ENCODE measurements at regions of chr6 and their contacts with region 1.

Region 1: DNA sequence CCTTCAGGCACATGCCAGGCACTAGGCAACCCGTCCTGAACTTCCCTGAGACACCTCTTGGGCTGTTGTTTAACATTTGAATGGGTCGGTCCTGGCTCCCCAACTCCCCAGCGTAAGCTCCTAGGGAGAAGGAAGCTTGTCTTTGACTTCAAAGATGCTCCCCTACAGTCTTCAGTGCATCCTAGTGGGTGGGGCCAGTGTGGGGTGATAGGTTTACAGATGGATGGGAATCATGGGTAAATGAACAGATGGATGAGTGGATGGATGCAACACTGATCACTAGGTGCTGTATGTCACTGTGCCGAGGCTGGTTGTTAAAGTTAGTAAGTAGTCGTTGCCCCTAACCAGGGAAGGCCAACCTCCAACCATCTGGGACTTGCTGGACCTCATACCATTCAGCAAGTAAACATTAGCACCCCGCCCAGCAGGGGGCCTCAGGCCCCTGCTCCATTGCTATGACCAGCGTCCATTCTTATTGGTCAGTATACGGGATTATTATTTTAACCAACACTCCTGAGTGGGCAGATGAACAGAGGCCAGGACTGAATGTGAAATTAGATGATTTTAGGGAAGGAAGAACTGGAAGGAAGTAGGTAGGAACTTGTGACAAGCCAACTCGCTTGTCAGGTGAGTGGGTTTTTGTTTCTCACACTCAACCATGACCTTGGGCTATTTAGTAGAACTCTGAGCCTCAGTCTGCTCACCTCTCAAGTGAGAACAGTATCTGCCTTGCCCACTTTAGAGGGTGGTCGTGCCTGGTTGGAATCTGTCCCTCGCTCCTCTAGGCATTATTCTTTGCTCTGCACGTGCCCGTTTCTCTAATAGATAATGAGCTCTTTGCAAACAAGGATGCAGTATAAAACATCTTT is 82.9 kb upstream of the FOXP4 start:
- DNase-seq: peak; percentile 79 to 84
- H3K4me3 ChIP-seq: no peak overlapping the region
- H3K4me3 Mint-ChIP-seq: no peak overlapping the region
- H3K27ac Mint-ChIP-seq: no peak overlapping the region
- H3K4me1 ChIP-seq: peaks cover 47% of the 10 kb centered on the region
- H3K4me1 Mint-ChIP-seq: peaks cover 46% of the 10 kb centered on the region
- H3K27me3 ChIP-seq: no peaks in the 10 kb centered on the region
- H3K27me3 Mint-ChIP-seq: no peaks in the 10 kb centered on the region
- CTCF ChIP-seq: peak; percentile 65 to 81

Region 2: GRCh38 chr6:41503841-41504465 is 40.7 kb after region 1 on chr6:
- CTCF ChIA-PET with region 1: interaction called, 3 read pairs
- POLR2A ChIA-PET with region 1: no interaction called
- intact Hi-C with region 1: loop called (anchors 2 kb)
- DNase-seq: peak; percentile 74 to 86
- H3K4me3 ChIP-seq: peak overlapping the region; percentile 33
- H3K4me3 Mint-ChIP-seq: peak overlapping the region; percentile 61
- H3K27ac Mint-ChIP-seq: peak overlapping the region; percentile 88
- H3K4me1 ChIP-seq: peaks cover 36% of the 10 kb centered on the region
- H3K4me1 Mint-ChIP-seq: peaks cover 44% of the 10 kb centered on the region
- H3K27me3 ChIP-seq: no peaks in the 10 kb centered on the region
- H3K27me3 Mint-ChIP-seq: no peaks in the 10 kb centered on the region
- CTCF ChIP-seq: no peak

Region 3: DNA sequence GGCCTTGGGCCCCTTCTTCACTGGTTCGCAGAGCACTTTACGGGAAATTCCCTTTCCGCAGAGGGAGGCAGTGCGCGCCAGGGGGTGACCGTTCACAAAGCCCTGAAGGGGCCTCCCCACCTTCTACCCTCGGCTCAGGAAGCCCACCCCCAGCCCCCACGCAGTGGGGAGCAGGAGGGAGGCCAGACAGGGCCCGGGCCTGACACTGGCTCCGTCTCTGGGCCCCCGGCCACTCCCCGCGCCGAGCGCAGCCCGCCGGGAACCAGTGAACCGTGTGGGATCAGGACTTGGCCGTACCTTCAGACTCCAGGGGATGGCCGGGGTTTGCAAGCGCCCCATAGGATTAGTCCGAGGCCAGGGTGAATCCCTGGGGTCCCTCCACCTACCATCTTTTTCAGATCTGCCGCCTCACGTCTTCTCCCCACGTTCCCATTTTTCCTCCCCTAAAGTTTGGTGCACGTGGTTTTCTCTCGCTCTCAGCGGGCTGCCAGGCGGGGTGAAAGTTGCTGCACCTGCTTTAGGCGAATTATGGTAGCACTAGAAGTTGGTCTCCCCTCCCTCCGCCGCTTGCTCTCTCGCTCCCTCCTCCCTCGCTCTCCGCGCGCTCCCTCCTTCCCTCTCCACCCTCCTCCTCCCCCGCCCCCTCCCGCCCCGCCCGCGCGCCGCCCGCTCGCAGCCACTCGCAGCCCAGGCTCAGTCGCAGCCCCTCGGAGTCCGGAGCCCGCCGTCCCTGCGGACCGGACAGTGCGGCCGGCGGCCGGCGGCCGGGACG is 82.6 kb after region 1 on chr6 and contains the start of gene FOXP4:
- CTCF ChIA-PET with region 1: no interaction called
- POLR2A ChIA-PET with region 1: no interaction called
- intact Hi-C with region 1: loop called (anchors 2 kb)
- DNase-seq: peak; percentile 90 to 94
- H3K4me3 ChIP-seq: peak within 1 kb of the TSS; percentile 95
- H3K4me3 Mint-ChIP-seq: peak within 1 kb of the TSS; percentile 91
- H3K27ac Mint-ChIP-seq: peak within 1 kb of the TSS; percentile 88
- H3K4me1 ChIP-seq: peaks cover 41% of the 10 kb centered on the region
- H3K4me1 Mint-ChIP-seq: peaks cover 29% of the 10 kb centered on the region
- H3K27me3 ChIP-seq: no peaks in the 10 kb centered on the region
- H3K27me3 Mint-ChIP-seq: no peaks in the 10 kb centered on the region
- CTCF ChIP-seq: no peak
- total RNA-seq, gene FOXP4: 108 and 117 TPM in 2 replicates

Region 4: GRCh38 chr6:41591859-41592502 is 128.7 kb after region 1 on chr6:
- CTCF ChIA-PET with region 1: interaction called, 4 read pairs
- POLR2A ChIA-PET with region 1: no interaction called
- intact Hi-C with region 1: loop called (anchors 1 kb)
- DNase-seq: peak; percentile 70 to 84
- H3K4me3 ChIP-seq: no peak overlapping the region
- H3K4me3 Mint-ChIP-seq: no peak overlapping the region
- H3K27ac Mint-ChIP-seq: peak overlapping the region; percentile 71
- H3K4me1 ChIP-seq: no peaks in the 10 kb centered on the region
- H3K4me1 Mint-ChIP-seq: peaks cover 24% of the 10 kb centered on the region
- H3K27me3 ChIP-seq: no peaks in the 10 kb centered on the region
- H3K27me3 Mint-ChIP-seq: no peaks in the 10 kb centered on the region
- CTCF ChIP-seq: peak; percentile 88 to 94

Measured in Caco-2 (cell line).